ENCODE measurements at regions of chr14 and their contacts with region 1.

Region 1: GRCh38 chr14:102316743-102317563 is 2.6 kb upstream of the ZNF839 start:
- DNase-seq: peak; percentile 94
- H3K4me3 ChIP-seq: peak overlapping the region; percentile 51
- H3K27ac ChIP-seq: peak overlapping the region; percentile 88
- H3K4me1 ChIP-seq: peaks cover 7% of the 10 kb centered on the region
- H3K27me3 ChIP-seq: no peaks in the 10 kb centered on the region
- CTCF ChIP-seq: peak; percentile 51

Region 2: GRCh38 chr14:101964297-101965144 is 352.4 kb before region 1 on chr14 and contains the start of gene DYNC1H1:
- intact Hi-C with region 1: loop called (anchors 10 kb)
- DNase-seq: peak; percentile 90
- H3K4me3 ChIP-seq: peak within 1 kb of the TSS; percentile 83
- H3K27ac ChIP-seq: peak within 1 kb of the TSS; percentile 85
- H3K4me1 ChIP-seq: peaks cover 4% of the 10 kb centered on the region
- H3K27me3 ChIP-seq: no peaks in the 10 kb centered on the region
- CTCF ChIP-seq: no peak
- total RNA-seq, gene DYNC1H1: 345 to 359 TPM

Region 3: GRCh38 chr14:102235275-102235897 is 81.6 kb before region 1 on chr14:
- intact Hi-C with region 1: loop called (anchors 2 kb)
- DNase-seq: peak; percentile 84
- H3K4me3 ChIP-seq: no peak overlapping the region
- H3K27ac ChIP-seq: no peak overlapping the region
- H3K4me1 ChIP-seq: no peaks in the 10 kb centered on the region
- H3K27me3 ChIP-seq: no peaks in the 10 kb centered on the region
- CTCF ChIP-seq: peak; percentile 77

Measured in colonic mucosa (tissue), 4 donors.